Breast epithelium (tissue), 4 donors: ENCODE measurements at regions of chr2 and their contacts with region 1.

Region 1: DNA sequence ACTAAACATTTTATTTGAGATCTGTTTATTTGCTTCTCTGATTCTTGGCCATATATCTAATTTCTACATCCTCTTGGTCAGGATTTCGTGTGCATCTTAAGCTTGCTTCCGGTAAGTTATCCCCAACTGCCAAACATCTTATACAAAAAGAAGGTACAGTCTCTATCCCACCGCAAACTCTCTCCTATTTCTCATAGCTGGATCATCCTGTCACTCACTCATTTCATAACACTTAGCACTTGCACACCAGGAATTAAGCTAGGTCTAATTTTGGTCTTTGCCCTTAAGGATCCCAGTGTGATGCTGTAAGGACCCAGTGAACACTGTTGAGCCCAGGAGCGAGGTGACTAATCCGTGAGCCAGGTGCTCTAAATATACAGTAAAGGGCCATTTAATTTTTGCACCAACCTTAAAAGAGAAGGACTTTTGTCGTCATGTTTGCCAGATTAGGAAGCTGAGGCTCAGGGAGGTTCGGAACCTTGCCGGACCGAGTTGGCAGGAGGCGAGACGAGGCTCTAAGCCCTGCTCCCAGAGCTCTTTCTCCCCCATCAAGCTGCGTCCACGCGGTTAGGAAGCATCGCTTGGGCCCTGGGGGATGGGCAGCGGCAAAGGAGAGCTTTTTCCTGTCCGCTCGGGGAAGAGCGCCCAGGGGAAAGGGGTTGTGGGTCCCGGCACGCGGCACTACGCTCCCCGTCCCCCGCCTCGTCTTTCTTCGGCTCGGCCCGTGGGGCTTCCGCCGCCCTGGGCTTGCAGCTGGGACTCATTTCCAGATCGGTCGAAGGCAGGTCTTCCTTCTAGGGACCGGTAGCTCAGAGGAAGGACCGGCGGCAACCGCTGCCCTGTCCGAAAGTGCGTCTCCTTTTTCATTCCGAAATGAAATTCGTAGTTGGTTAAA is 4.1 kb upstream of the ITPRIPL1 start:
- DNase-seq: no peak
- H3K4me3 ChIP-seq: peak overlapping the region; percentile 60 to 81 (median 68)
- H3K27ac ChIP-seq: peak overlapping the region; percentile 57 to 58
- H3K4me1 ChIP-seq: peaks cover 0 to 5% of the 10 kb centered on the region in 2 donors
- H3K27me3 ChIP-seq: no peaks in the 10 kb centered on the region
- CTCF ChIP-seq: no peak
- POLR2A ChIP-seq: no peak

Region 2: DNA sequence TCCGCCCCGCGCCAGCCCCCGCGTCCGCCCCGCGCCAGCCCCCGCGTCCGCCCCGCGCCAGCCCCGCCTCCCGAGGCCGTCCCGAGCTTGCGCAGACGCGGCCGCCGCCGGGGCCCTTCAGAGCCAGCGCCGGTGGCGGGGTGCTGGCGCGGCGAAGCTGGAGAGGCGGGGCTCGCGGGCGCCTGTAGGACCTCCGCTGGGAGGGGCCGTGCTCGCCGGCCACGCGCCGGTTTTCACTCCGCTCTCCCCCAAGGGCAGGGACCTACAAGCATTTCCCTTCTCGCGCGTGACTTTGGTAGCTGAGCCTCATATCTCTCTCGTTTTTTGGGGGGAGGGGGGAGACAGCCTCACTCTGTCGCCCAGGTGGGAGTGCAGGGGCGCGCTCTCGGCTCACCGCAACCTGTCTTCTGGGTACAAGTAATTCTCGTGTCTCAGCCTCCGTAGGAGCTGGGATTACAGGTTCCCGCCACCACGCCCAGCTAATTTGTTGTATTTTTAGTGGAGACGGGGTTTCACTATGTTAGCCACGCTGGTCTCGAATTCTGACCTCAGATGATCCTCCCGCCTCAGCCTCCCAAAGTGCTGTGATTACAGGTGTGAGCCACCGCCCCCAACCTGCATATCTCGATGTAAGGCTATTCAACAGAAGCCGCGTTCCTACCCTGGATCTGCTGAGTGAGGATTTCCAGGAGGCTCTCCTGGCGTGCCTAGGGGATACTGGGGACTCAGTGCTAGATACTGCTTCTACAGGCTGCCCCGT is 1161.1 kb before region 1 on chr2 and contains the start of gene ZNF514:
- intact Hi-C with region 1: loop called (anchors 10 kb)
- DNase-seq: peak; percentile 57 to 62
- H3K4me3 ChIP-seq: peak within 1 kb of the TSS; percentile 74 to 95 (median 86)
- H3K27ac ChIP-seq: peak within 1 kb of the TSS; percentile 82 to 89
- H3K4me1 ChIP-seq: peaks cover 0 to 18% of the 10 kb centered on the region in 2 donors
- H3K27me3 ChIP-seq: no peaks in the 10 kb centered on the region
- CTCF ChIP-seq: no peak
- POLR2A ChIP-seq: no peak
- total RNA-seq, gene ZNF514: 18.7 to 36.1 (median 25.3) TPM

Region 3: GRCh38 chr2:95760806-95761530 is 560.0 kb before region 1 on chr2:
- intact Hi-C with region 1: no loop called
- DNase-seq: no peak
- H3K4me3 ChIP-seq: no peak overlapping the region
- H3K27ac ChIP-seq: no peak overlapping the region
- H3K4me1 ChIP-seq: no peaks in the 10 kb centered on the region
- H3K27me3 ChIP-seq: no peaks in the 10 kb centered on the region
- CTCF ChIP-seq: no peak
- POLR2A ChIP-seq: no peak

Region 4: GRCh38 chr2:96527286-96528005 is 206.5 kb after region 1 on chr2:
- intact Hi-C with region 1: loop called (anchors 10 kb)
- DNase-seq: no peak
- H3K4me3 ChIP-seq: peak overlapping the region; percentile 56 to 86 (median 59)
- H3K27ac ChIP-seq: peak overlapping the region; percentile 95 to 99
- H3K4me1 ChIP-seq: peaks cover 9 to 21% of the 10 kb centered on the region in 2 donors
- H3K27me3 ChIP-seq: no peaks in the 10 kb centered on the region
- CTCF ChIP-seq: no peak
- POLR2A ChIP-seq: no peak

Region 5: DNA sequence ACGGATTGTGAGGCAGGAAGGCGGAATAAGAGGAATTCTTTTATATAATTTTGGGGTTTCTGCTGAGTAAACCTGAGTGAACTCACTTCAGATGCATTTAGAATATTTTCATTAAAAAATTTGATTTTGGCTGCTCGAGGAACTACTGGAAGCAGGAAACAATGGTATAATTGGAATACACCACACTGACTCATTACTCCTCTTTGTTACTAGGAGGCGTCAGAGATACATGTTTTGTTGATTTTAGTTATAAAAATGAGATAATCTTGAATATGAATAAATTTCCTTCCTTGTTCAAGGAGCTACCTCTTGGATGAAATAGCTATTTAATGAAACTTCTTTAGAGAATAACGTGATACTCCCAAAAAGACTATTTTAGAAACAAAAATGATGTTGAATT is 889.4 kb after region 1 on chr2:
- intact Hi-C with region 1: no loop called
- DNase-seq: no peak
- H3K4me3 ChIP-seq: no peak overlapping the region
- H3K27ac ChIP-seq: no peak overlapping the region
- H3K4me1 ChIP-seq: no peaks in the 10 kb centered on the region
- H3K27me3 ChIP-seq: no peaks in the 10 kb centered on the region
- CTCF ChIP-seq: no peak
- POLR2A ChIP-seq: no peak